ENCODE measurements at regions of chr2 and their contacts with region 1.

Region 1: DNA sequence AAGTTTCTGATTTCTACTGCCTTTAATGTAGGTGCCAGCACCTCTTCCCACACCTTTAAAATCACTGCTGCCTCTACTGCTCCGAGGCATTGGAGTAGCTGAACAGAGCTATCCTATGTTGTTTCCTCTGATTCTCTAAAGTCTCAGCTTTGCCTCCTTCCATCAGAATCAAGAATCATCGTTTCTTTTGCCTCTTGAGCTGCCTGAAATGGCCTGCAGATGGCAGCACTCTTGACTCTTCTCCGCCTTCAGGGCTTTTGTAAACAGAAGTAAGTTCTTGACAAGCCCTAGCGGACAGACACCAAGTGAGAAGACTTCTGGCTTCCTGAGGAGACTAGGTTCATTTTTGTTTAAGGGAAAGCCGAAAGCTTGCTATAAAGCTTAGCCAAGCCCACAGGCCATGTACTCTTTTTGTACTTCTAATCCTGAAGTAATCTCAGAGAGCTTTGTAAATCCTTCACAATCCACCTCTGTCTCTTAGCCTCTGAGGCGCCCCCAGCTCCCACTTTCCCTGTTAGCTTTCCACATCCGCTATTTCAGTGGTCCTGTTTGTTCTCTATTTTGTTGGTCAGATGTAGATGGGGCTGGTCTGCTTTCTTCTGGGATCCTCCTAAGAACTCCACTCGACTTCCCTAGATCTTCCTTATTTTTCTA is 48.4 kb downstream of the GTF3C3 start:
- DNase-seq: peak; percentile 50
- ATAC-seq: peak; percentile 96
- H3K4me3 ChIP-seq: no peak overlapping the region
- H3K27ac ChIP-seq: no peak overlapping the region
- H3K4me1 ChIP-seq: 0 out of 2 replicates have a peak, but pooled peaks cover 2% of the 10 kb centered on the region
- H3K27me3 ChIP-seq: no peaks in the 10 kb centered on the region
- CTCF ChIP-seq: peak; percentile 93

Region 2: GRCh38 chr2:196088203-196088602 is 662.9 kb before region 1 on chr2:
- CTCF ChIA-PET with region 1: no interaction called
- POLR2A ChIA-PET with region 1: no interaction called
- in situ Hi-C with region 1: no loop called
- intact Hi-C with region 1: loop called (anchors 10 kb)
- DNase-seq: no peak
- ATAC-seq: no peak
- H3K4me3 ChIP-seq: no peak overlapping the region
- H3K27ac ChIP-seq: no peak overlapping the region
- H3K4me1 ChIP-seq: no peaks in the 10 kb centered on the region
- H3K27me3 ChIP-seq: no peaks in the 10 kb centered on the region
- CTCF ChIP-seq: no peak

Region 3: GRCh38 chr2:196592912-196593881 is 157.9 kb before region 1 on chr2:
- CTCF ChIA-PET with region 1: no interaction called
- POLR2A ChIA-PET with region 1: no interaction called
- in situ Hi-C with region 1: no loop called
- intact Hi-C with region 1: loop called (anchors 10 kb)
- DNase-seq: no peak
- ATAC-seq: peak; percentile 88
- H3K4me3 ChIP-seq: peak within 1 kb of the TSS; percentile 66 to 88
- H3K27ac ChIP-seq: peak within 1 kb of the TSS; percentile 84
- H3K4me1 ChIP-seq: peaks cover 25% of the 10 kb centered on the region
- H3K27me3 ChIP-seq: no peaks in the 10 kb centered on the region; the same call in 1 of the 2 replicates
- CTCF ChIP-seq: peak; percentile 42

Region 4: GRCh38 chr2:197472166-197472565 is 721.1 kb after region 1 on chr2:
- CTCF ChIA-PET with region 1: no interaction called
- POLR2A ChIA-PET with region 1: no interaction called
- in situ Hi-C with region 1: no loop called
- intact Hi-C with region 1: no loop called
- DNase-seq: no peak
- ATAC-seq: no peak
- H3K4me3 ChIP-seq: no peak overlapping the region
- H3K27ac ChIP-seq: no peak overlapping the region
- H3K4me1 ChIP-seq: no peaks in the 10 kb centered on the region
- H3K27me3 ChIP-seq: no peaks in the 10 kb centered on the region
- CTCF ChIP-seq: no peak

Measured in Panc1 (cell line).